CD8-positive, alpha-beta memory T cell (primary cell): ENCODE measurements at regions of chr10 and their contacts with region 1.

Region 1: GRCh38 chr10:7687228-7687907 is 15.7 kb upstream of the ITIH2 start:
- DNase-seq: peak; percentile 51 to 84 (median 67)
- H3K4me3 ChIP-seq: no peak overlapping the region
- H3K4me3 Mint-ChIP-seq: peak overlapping the region in 2 of 7 donors; percentile 1 to 48
- H3K27ac ChIP-seq: no peak overlapping the region
- H3K27ac Mint-ChIP-seq: peak overlapping the region in 2 of 8 donors; percentile 2 to 35
- H3K4me1 ChIP-seq: no peaks in the 10 kb centered on the region
- H3K4me1 Mint-ChIP-seq: peaks cover 4 to 7% (median 6%) of the 10 kb centered on the region in 3 donors
- H3K27me3 ChIP-seq: no peaks in the 10 kb centered on the region
- H3K27me3 Mint-ChIP-seq: peaks cover 16 to 25% of the 10 kb centered on the region in 2 donors

Region 2: GRCh38 chr10:7424315-7424714 is 263.1 kb before region 1 on chr10:
- CTCF ChIA-PET with region 1: interaction called, 13 read pairs
- POLR2A ChIA-PET with region 1: no interaction called
- DNase-seq: peak in 2 of 5 donors; percentile 27 to 69
- H3K4me3 ChIP-seq: no peak overlapping the region
- H3K4me3 Mint-ChIP-seq: peak overlapping the region in 1 of 7 donors; percentile 12
- H3K27ac ChIP-seq: no peak overlapping the region
- H3K27ac Mint-ChIP-seq: peak overlapping the region in 4 of 8 donors; percentile 13 to 37 (median 32)
- H3K4me1 ChIP-seq: peaks cover 7% of the 10 kb centered on the region
- H3K4me1 Mint-ChIP-seq: peaks cover 8 to 17% (median 14%) of the 10 kb centered on the region in 3 donors
- H3K27me3 ChIP-seq: no peaks in the 10 kb centered on the region
- H3K27me3 Mint-ChIP-seq: peaks cover 0 to 1% of the 10 kb centered on the region in 2 donors

Region 3: GRCh38 chr10:7525314-7526016 is 161.9 kb before region 1 on chr10:
- CTCF ChIA-PET with region 1: interaction called, 44 read pairs
- POLR2A ChIA-PET with region 1: no interaction called
- DNase-seq: peak; percentile 29 to 65 (median 53)
- H3K4me3 ChIP-seq: no peak overlapping the region
- H3K4me3 Mint-ChIP-seq: no peak overlapping the region
- H3K27ac ChIP-seq: no peak overlapping the region
- H3K27ac Mint-ChIP-seq: no peak overlapping the region
- H3K4me1 ChIP-seq: no peaks in the 10 kb centered on the region
- H3K4me1 Mint-ChIP-seq: peaks cover 6 to 19% (median 15%) of the 10 kb centered on the region in 3 donors
- H3K27me3 ChIP-seq: no peaks in the 10 kb centered on the region
- H3K27me3 Mint-ChIP-seq: peaks cover 2 to 12% of the 10 kb centered on the region in 2 donors

Region 4: GRCh38 chr10:7671121-7671520 is 16.2 kb before region 1 on chr10:
- CTCF ChIA-PET with region 1: interaction called, 13 read pairs
- POLR2A ChIA-PET with region 1: no interaction called
- DNase-seq: no peak
- H3K4me3 ChIP-seq: no peak overlapping the region
- H3K4me3 Mint-ChIP-seq: no peak overlapping the region
- H3K27ac ChIP-seq: no peak overlapping the region
- H3K27ac Mint-ChIP-seq: no peak overlapping the region
- H3K4me1 ChIP-seq: peaks cover 4% of the 10 kb centered on the region
- H3K4me1 Mint-ChIP-seq: peaks cover 6 to 12% (median 11%) of the 10 kb centered on the region in 3 donors
- H3K27me3 ChIP-seq: peaks cover 12% of the 10 kb centered on the region
- H3K27me3 Mint-ChIP-seq: peaks cover 28 to 70% of the 10 kb centered on the region in 2 donors